ACHN (cell line): ENCODE measurements at regions of chr7 and their contacts with region 1.

Region 1: DNA sequence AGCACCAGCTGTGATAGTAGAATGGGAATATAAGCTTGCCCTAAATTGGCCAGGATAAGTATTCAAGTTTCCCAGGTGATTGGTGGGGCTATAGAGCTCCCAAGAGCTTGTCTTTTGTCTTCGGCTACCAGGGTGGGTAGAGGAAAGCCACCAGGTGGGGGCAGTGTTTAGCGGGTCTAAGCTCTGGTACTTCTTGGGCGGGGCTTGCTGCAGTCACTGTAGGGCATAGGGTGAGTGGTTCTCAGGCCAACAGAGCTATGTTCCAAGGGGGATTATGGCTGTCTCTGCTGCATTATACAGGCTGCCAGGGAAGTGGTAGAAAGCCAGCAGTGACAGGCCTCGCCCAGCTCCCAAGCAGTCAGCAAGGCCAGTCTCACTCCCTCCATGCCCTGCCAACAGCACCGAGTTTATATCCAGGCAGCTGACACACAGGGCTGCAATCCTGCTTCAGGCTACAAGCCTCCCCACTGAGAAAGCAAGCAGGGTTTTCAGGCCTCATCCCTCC is 110.7 kb downstream of the ZNF467 start:
- DNase-seq: peak; percentile 86

Region 2: DNA sequence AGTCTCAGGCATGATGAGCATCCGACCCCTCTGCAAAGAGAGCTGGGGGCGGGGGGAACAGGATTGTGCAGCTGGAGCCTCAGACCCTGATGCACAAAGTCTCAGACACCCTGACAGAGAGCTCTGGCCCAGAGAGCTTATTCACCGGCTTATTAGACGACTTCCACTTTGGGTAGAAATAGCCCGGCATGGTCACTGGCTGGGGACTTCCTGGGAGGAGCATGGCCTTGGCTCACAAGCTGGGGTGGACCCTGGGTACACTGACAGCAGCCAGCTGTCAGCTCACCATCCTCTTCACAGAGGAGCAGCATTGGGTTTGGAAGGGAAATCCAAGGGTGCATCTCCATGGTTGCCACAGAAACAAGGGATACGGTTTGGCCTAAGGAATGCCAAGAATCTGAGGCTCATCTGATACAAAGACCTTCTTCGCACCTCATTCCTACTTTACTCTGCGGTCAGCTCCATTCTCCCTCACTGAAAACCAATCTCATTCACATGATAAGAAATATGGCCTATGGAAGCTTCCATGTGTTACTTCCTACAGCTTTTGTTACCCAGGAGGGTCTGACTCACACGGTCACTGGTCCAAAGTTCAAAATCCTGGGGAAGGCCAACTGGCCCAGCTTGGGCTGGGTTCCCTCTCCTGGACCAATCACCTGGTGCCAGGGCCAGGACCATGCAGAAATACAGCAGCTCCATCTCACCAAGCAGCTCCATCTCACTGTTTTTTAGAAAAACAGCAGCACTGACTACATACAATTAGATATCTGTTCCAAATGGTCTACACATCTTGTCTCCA is 85.6 kb after region 1 on chr7:
- in situ Hi-C with region 1: loop called (anchors 5 kb)
- DNase-seq: no peak